ENCODE measurements at regions of chr20 and their contacts with region 1.

Region 1: GRCh38 chr20:20410678-20411077 is 42.8 kb downstream of the INSM1 start:
- DNase-seq: peak; percentile 51 to 54
- ATAC-seq: peak; percentile 69 to 98 (median 88)
- H3K4me3 ChIP-seq: no peak overlapping the region
- H3K27ac ChIP-seq: no peak overlapping the region
- H3K4me1 ChIP-seq: peaks cover 0 to 33% (median 18%) of the 10 kb centered on the region in 9 donors
- H3K27me3 ChIP-seq: no peaks in the 10 kb centered on the region
- CTCF ChIP-seq: no peak

Region 2: DNA sequence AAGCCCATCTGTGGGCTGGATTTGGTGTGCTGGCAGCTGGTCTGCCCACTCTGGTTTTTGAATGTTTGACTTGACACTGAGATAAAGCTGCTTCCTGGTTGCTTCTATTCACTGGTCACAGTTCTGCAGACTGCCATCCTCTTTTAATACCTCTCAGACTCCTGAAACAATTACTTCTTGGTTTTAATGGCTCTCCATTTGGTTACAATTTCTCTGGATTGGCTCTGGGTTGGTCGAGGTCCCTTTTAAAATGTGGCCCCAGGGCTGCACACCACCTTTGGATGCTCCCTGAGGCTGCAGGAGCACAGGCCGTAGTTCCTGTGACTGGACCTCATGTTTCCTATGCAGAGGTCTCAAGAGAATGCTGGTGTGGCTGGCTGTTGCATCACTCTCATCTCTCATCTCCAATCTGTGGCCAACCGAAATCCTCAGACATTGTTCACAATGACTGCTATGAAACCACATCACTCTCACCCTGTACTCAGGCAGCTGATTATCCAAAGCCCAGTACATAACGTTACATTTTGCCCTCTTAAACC is 55.7 kb after region 1 on chr20:
- intact Hi-C with region 1: loop called in 1 of 10 experiments (anchors 5 kb)
- DNase-seq: no peak
- ATAC-seq: peak in 3 of 8 donors; percentile 57 to 86 (median 65)
- H3K4me3 ChIP-seq: no peak overlapping the region
- H3K27ac ChIP-seq: no peak overlapping the region
- H3K4me1 ChIP-seq: peaks cover 0 to 9% (median 0%) of the 10 kb centered on the region in 9 donors
- H3K27me3 ChIP-seq: no peaks in the 10 kb centered on the region
- CTCF ChIP-seq: no peak